ENCODE measurements at regions of chr9 and their contacts with region 1.

Region 1: GRCh38 chr9:92790542-92791527 is 26.2 kb upstream of the BICD2 start:
- DNase-seq: peak; percentile 68 to 83 (median 75)
- ATAC-seq: peak; percentile 82 to 97 (median 95)
- H3K4me3 ChIP-seq: no peak overlapping the region
- H3K27ac ChIP-seq: no peak overlapping the region
- H3K4me1 ChIP-seq: peaks cover 0 to 7% (median 0%) of the 10 kb centered on the region in 12 donors
- H3K27me3 ChIP-seq: peaks cover 0 to 2% (median 0%) of the 10 kb centered on the region in 9 donors
- CTCF ChIP-seq: peak; percentile 72 to 87 (median 83)
- POLR2A ChIP-seq: no peak

Region 2: DNA sequence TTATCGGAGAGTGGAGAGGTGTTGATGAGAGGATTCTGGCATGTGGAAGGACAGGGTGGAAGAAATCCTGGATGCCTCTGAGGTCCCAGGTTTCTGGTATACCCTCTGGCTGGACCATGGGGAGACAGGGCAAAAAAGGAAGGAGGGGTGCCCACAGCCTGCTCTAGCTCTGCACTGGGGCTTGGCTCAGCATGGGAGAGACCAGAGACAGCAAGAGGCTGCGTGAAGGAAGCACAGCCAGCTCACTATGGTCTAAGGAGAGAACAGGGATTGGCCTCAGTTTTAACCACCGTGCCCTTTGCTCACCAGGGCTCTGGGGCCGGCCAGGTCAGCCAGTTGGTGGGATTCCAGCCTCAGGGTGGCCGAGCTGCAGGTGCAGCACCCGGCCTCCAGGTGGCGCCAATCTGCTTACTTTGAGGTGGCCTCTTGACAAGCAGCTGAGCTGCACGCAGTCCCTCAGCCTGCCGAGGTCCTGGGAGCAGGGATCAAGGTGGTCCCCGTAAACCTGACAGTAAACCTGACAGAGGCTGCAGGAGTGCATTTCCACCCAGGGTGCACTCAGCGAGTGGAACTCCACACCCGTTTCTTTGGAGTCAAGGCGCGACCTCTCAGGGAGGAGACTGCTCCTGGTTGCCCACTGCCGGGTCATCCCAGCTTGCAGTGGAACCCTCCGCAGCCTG is 650.6 kb before region 1 on chr9:
- intact Hi-C with region 1: loop called in 4 of 10 experiments (anchors 5 to 10 kb)
- DNase-seq: peak; percentile 72 to 88 (median 74)
- ATAC-seq: peak; percentile 58 to 76 (median 71)
- H3K4me3 ChIP-seq: peak overlapping the region in 9 of 12 donors; percentile 12 to 60 (median 49)
- H3K27ac ChIP-seq: no peak overlapping the region
- H3K4me1 ChIP-seq: peaks cover 0 to 21% (median 8%) of the 10 kb centered on the region in 12 donors
- H3K27me3 ChIP-seq: peaks cover 4 to 17% (median 7%) of the 10 kb centered on the region in 9 donors
- CTCF ChIP-seq: peak; percentile 82 to 96 (median 92)
- POLR2A ChIP-seq: no peak

Region 3: DNA sequence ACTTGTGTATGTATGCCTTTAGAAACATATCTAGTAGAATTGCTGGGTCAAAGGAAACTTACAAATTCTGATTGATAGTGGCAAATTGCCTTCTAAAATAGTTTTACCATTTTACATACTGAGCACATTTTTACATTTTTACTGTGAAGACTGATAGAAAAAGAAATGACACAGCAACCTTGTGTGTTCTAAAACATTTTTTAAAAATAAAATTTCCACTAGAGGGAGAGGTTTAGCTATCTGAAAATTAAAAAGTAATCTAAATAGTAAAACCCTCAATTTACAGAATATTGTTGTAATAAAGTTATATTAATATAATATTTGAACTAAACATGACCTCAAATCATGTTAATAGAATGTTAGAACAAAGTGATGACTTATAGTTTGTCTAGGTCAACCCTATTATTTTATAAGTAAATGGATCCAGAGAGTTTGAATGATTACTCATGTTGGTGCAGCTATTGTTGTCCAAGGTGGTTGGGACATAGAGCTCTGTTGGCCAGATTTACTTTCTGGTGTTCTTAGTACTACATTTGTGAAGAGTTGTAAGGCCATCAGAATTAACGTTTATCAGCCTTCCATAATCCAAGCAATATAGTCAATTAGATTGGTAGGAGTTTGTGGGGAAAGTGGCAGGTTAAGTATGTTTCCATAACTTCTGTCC is 447.9 kb before region 1 on chr9:
- intact Hi-C with region 1: loop called in 1 of 10 experiments (anchors 10 kb)
- DNase-seq: no peak
- ATAC-seq: no peak
- H3K4me3 ChIP-seq: no peak overlapping the region
- H3K27ac ChIP-seq: peak overlapping the region in 2 of 12 donors; percentile 0 to 6
- H3K4me1 ChIP-seq: peaks cover 0 to 8% (median 0%) of the 10 kb centered on the region in 12 donors
- H3K27me3 ChIP-seq: no peaks in the 10 kb centered on the region
- CTCF ChIP-seq: peak in 9 of 12 donors; percentile 20 to 57 (median 37)
- POLR2A ChIP-seq: no peak

Region 4: DNA sequence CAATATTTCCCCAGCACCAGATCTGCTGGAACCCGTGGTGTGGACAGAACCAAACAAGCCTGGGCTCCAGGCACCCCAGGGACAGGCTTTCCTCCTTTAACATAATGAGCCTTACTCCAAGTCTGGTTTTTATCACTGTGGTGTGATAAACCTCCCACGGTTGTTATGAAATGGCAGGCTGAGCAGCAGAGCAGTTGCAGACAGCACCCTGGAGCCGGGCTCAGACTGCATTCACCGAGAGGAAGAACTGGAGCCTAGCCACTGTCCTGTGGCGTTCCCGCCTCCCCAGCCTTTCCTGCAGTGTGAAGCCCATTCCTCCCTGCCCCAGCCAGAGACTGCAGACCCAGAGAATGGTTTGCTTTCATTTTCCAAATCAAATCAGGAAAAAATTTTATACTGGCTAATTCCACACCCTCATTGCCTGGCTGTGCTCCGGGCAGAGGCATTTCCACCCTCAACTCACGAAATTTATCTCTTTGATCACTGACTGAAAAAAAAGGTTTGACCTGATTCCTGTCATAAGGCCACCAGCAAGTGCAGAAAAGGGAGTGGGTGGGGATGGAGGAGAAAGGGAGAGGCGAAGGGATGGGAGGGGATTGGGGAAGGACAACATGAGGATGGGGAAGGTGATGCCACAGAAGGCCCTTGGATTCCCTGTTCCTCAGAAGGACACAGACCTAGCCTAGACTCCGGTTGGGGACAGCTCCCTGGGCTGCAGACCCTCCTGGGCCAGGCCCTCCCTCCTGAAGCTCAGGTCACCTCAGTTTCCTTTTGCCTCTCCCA is 139.8 kb before region 1 on chr9:
- intact Hi-C with region 1: loop called in 1 of 10 experiments (anchors 5 kb)
- DNase-seq: peak; percentile 53 to 79 (median 74)
- ATAC-seq: peak; percentile 73 to 90 (median 86)
- H3K4me3 ChIP-seq: peak overlapping the region in 1 of 12 donors; percentile 19
- H3K27ac ChIP-seq: peak overlapping the region in 8 of 12 donors; percentile 13 to 74 (median 48)
- H3K4me1 ChIP-seq: peaks cover 0 to 26% (median 5%) of the 10 kb centered on the region in 12 donors
- H3K27me3 ChIP-seq: no peaks in the 10 kb centered on the region
- CTCF ChIP-seq: no peak
- POLR2A ChIP-seq: no peak

Region 5: DNA sequence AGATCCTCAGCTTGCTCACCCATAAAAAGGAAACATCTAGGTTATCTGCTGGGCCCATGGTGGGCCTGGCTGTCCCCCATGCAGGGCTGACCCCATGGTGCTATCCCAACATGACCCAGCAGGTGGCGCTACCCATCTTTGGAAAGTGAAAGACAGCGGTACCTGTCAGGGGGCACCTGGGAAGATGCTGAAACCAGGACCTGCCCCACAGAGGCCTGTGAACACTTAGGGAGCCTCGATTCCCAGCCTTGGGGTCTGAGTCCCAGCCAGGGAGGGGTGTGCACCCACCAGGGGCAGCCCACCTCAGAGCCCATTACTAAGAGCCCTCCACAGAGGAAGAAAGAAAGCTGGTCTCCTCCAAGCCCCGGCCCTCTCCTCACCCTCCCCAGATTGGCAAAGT is 74.3 kb before region 1 on chr9:
- intact Hi-C with region 1: loop called (anchors 1 to 2 kb)
- DNase-seq: peak; percentile 59 to 84 (median 65)
- ATAC-seq: peak; percentile 18 to 48 (median 36)
- H3K4me3 ChIP-seq: no peak overlapping the region
- H3K27ac ChIP-seq: peak overlapping the region in 9 of 12 donors; percentile 15 to 78 (median 60)
- H3K4me1 ChIP-seq: peaks cover 11 to 27% (median 20%) of the 10 kb centered on the region in 12 donors
- H3K27me3 ChIP-seq: no peaks in the 10 kb centered on the region
- CTCF ChIP-seq: peak; percentile 87 to 96 (median 91)
- POLR2A ChIP-seq: no peak

Region 6: GRCh38 chr9:92723299-92723625 is 67.6 kb before region 1 on chr9:
- intact Hi-C with region 1: loop called in 1 of 10 experiments (anchors 2 kb)
- DNase-seq: no peak
- ATAC-seq: no peak
- H3K4me3 ChIP-seq: no peak overlapping the region
- H3K27ac ChIP-seq: no peak overlapping the region
- H3K4me1 ChIP-seq: peaks cover 0 to 31% (median 14%) of the 10 kb centered on the region in 12 donors
- H3K27me3 ChIP-seq: no peaks in the 10 kb centered on the region
- CTCF ChIP-seq: no peak
- POLR2A ChIP-seq: no peak

Region 7: GRCh38 chr9:92764988-92765936 is 25.6 kb before region 1 on chr9:
- intact Hi-C with region 1: loop called in 7 of 10 experiments (anchors 1 to 2 kb)
- DNase-seq: peak; percentile 99
- ATAC-seq: peak; percentile 95 to 98 (median 98)
- H3K4me3 ChIP-seq: peak overlapping the region; percentile 42 to 100 (median 98)
- H3K27ac ChIP-seq: peak overlapping the region; percentile 97 to 100 (median 100)
- H3K4me1 ChIP-seq: peaks cover 13 to 68% (median 50%) of the 10 kb centered on the region in 12 donors
- H3K27me3 ChIP-seq: no peaks in the 10 kb centered on the region
- CTCF ChIP-seq: peak; percentile 90 to 100 (median 98)
- POLR2A ChIP-seq: peak; percentile 13 to 88

Measured in heart left ventricle (tissue), 16 donors.